Activated CD4-positive, alpha-beta memory T cell treated with anti-CD3 and anti-CD28 coated beads for 36 hours (primary cell): ENCODE measurements at regions of chr12 and their contacts with region 1.

Region 1: GRCh38 chr12:96047229-96048211 is 12.1 kb upstream of the LTA4H start:
- DNase-seq: peak; percentile 36
- H3K4me3 Mint-ChIP-seq: peak overlapping the region; percentile 31
- H3K27ac Mint-ChIP-seq: peak overlapping the region; percentile 92
- H3K4me1 Mint-ChIP-seq: peaks cover 53% of the 10 kb centered on the region
- H3K27me3 Mint-ChIP-seq: no peaks in the 10 kb centered on the region

Region 2: DNA sequence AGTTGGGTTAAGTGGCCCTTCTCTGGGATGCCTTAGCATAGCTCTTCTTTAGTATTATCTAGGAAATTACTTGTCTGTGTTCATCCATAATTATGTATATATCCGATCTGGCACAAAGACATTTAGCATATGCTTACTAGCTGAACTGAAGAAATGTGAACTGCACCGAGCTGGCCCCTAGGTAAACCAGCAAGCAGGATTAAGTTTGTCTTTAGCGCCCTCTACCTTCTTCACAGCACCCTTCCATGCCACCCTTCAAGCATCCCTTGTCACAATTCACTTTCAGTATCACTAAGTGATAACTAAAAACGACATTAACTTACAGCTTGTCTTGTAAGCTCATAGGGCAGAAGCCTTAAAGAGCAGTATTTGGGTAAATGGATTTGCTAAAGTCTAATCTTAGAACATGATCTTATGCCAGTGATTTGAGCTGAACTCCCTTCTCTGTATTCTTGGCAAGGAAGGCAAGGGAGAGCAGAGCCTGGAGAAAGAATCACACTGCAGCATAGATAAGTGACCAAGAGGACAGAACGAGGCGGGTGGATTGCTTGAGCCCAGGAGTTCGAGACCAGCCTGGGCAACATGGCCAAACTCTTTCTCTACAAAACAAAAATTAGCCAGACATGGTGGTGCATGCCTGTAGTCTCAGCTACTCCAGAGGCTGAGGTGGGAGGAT is 48.8 kb before region 1 on chr12:
- CTCF ChIA-PET with region 1: interaction called, 4 read pairs
- POLR2A ChIA-PET with region 1: no interaction called
- intact Hi-C with region 1: loop called (anchors 1 kb)
- DNase-seq: peak; percentile 65
- H3K4me3 Mint-ChIP-seq: no peak overlapping the region
- H3K27ac Mint-ChIP-seq: no peak overlapping the region
- H3K4me1 Mint-ChIP-seq: peaks cover 9% of the 10 kb centered on the region
- H3K27me3 Mint-ChIP-seq: no peaks in the 10 kb centered on the region

Region 3: GRCh38 chr12:96177013-96177412 is 129.5 kb after region 1 on chr12:
- CTCF ChIA-PET with region 1: interaction called, 3 read pairs
- POLR2A ChIA-PET with region 1: interaction called, 5 read pairs
- intact Hi-C with region 1: loop called (anchors 1 kb)
- DNase-seq: peak; percentile 90
- H3K4me3 Mint-ChIP-seq: peak overlapping the region; percentile 10
- H3K27ac Mint-ChIP-seq: peak overlapping the region; percentile 83
- H3K4me1 Mint-ChIP-seq: peaks cover 24% of the 10 kb centered on the region
- H3K27me3 Mint-ChIP-seq: no peaks in the 10 kb centered on the region

Region 4: DNA sequence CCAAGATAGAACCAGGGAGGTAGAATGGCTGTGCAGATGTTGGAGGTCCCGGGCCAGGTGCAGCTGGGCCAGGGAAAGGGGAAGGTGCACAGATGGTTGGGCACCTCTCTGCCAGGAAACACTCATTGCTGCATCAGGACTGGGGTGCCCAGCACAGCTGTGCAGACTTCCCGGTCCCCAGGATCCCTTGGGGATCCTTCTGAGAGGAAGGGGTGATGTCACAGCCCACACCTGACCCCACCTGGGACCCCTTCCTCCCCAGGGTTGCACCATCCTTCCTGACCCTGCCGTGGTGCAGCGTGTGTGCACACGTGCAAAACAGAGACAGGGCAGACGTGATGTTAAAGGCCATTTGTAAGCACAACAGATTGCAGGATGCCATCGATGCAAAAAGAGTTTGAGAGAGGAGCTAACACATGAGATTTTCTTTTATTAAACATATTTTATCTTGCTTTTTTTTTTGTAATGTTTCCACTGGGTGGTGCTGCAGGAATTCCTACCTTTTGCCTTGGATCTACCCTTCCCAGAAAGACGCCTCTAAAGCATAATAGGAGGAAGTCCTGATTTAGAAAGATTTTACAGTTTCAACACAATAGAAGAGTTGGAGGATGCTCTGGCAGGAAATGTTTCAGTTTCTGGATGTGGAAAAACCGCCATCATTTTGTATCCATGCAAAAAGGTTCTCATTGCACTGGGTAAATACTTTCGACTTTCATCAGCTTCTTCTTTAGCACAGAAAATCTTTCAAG is 161.5 kb after region 1 on chr12:
- CTCF ChIA-PET with region 1: no interaction called
- POLR2A ChIA-PET with region 1: no interaction called
- intact Hi-C with region 1: loop called (anchors 1 kb)
- DNase-seq: peak; percentile 15
- H3K4me3 Mint-ChIP-seq: peak overlapping the region; percentile 30
- H3K27ac Mint-ChIP-seq: peak overlapping the region; percentile 93
- H3K4me1 Mint-ChIP-seq: peaks cover 95% of the 10 kb centered on the region
- H3K27me3 Mint-ChIP-seq: no peaks in the 10 kb centered on the region

Region 5: DNA sequence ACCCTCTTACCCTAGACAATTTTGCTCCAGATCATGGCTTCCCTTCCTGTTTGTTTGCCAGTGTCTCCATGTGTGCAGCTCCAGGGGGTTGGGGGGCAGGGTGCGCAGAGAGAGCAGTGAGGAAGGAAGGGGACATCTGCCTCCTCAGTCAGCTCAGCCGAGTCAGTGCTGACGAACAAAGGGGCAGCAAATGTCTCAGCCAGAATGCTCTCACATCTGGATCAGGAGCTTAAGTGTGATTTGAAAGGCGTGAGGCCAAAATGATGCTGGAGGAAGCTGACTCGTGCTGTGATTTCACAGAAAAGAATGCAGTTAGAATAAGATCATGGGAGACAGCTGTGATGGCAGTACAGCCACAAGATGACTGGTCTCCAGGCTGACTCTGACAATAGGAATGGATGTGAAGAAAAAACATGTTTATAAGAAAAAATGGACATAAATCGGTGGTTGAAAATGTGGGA is 379.8 kb after region 1 on chr12:
- CTCF ChIA-PET with region 1: no interaction called
- POLR2A ChIA-PET with region 1: no interaction called
- intact Hi-C with region 1: loop called (anchors 1 kb)
- DNase-seq: peak; percentile 76
- H3K4me3 Mint-ChIP-seq: peak overlapping the region; percentile 17
- H3K27ac Mint-ChIP-seq: peak overlapping the region; percentile 79
- H3K4me1 Mint-ChIP-seq: peaks cover 47% of the 10 kb centered on the region
- H3K27me3 Mint-ChIP-seq: no peaks in the 10 kb centered on the region

Region 6: GRCh38 chr12:96489103-96490056 is 441.9 kb after region 1 on chr12 and contains the start of gene CFAP54:
- CTCF ChIA-PET with region 1: no interaction called
- POLR2A ChIA-PET with region 1: no interaction called
- intact Hi-C with region 1: loop called (anchors 1 kb)
- DNase-seq: peak; percentile 96
- H3K4me3 Mint-ChIP-seq: peak within 1 kb of the TSS; percentile 83
- H3K27ac Mint-ChIP-seq: peak within 1 kb of the TSS; percentile 16
- H3K4me1 Mint-ChIP-seq: peaks cover 36% of the 10 kb centered on the region
- H3K27me3 Mint-ChIP-seq: no peaks in the 10 kb centered on the region
- total RNA-seq, gene CFAP54: 0.31 to 0.33 TPM

Region 7: GRCh38 chr12:96516472-96517430 is 469.2 kb after region 1 on chr12:
- CTCF ChIA-PET with region 1: no interaction called
- POLR2A ChIA-PET with region 1: no interaction called
- intact Hi-C with region 1: loop called (anchors 1 kb)
- DNase-seq: peak; percentile 92
- H3K4me3 Mint-ChIP-seq: no peak overlapping the region
- H3K27ac Mint-ChIP-seq: peak overlapping the region; percentile 44
- H3K4me1 Mint-ChIP-seq: peaks cover 15% of the 10 kb centered on the region
- H3K27me3 Mint-ChIP-seq: no peaks in the 10 kb centered on the region